PC-9 (cell line): ENCODE measurements at regions of chr14 and their contacts with region 1.

Region 1: DNA sequence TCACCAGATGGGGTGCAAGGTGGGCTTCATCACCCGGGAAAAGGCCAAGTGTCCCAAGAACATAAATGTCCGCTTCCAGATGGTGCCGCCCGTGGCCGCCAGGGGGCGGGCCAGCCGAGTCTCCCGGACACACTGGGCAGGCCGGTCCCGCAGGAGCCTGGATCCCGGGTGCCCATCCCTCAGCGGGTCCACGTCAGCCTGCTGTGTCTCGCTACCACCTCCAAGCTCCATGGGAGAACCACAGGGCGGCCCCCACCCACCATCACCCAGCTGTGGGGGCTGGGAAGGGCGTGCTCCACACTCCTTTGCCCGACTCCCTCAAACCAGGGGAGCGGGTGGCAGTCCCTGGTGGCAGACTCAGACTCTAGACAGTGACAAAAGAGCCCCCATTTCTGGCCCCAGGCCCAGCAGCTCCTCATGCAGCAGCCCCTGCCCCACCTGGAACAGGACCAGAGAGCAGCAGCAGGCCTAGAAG is 22.0 kb upstream of the NUDT14 start:
- DNase-seq: peak in 1 of 2 experiments; percentile 67
- H3K4me3 ChIP-seq: no peak overlapping the region
- H3K27ac ChIP-seq: no peak overlapping the region
- H3K4me1 ChIP-seq: peaks cover 23% of the 10 kb centered on the region
- H3K27me3 ChIP-seq: no peaks in the 10 kb centered on the region
- CTCF ChIP-seq: peak; percentile 95

Region 2: GRCh38 chr14:105281371-105282097 is 78.4 kb after region 1 on chr14:
- CTCF ChIA-PET with region 1: no interaction called
- POLR2A ChIA-PET with region 1: no interaction called
- intact Hi-C with region 1: loop called (anchors 2 kb)
- DNase-seq: peak in 1 of 2 experiments; percentile 20
- H3K4me3 ChIP-seq: no peak overlapping the region
- H3K27ac ChIP-seq: no peak overlapping the region
- H3K4me1 ChIP-seq: no peaks in the 10 kb centered on the region
- H3K27me3 ChIP-seq: no peaks in the 10 kb centered on the region
- CTCF ChIP-seq: peak; percentile 69

Region 3: DNA sequence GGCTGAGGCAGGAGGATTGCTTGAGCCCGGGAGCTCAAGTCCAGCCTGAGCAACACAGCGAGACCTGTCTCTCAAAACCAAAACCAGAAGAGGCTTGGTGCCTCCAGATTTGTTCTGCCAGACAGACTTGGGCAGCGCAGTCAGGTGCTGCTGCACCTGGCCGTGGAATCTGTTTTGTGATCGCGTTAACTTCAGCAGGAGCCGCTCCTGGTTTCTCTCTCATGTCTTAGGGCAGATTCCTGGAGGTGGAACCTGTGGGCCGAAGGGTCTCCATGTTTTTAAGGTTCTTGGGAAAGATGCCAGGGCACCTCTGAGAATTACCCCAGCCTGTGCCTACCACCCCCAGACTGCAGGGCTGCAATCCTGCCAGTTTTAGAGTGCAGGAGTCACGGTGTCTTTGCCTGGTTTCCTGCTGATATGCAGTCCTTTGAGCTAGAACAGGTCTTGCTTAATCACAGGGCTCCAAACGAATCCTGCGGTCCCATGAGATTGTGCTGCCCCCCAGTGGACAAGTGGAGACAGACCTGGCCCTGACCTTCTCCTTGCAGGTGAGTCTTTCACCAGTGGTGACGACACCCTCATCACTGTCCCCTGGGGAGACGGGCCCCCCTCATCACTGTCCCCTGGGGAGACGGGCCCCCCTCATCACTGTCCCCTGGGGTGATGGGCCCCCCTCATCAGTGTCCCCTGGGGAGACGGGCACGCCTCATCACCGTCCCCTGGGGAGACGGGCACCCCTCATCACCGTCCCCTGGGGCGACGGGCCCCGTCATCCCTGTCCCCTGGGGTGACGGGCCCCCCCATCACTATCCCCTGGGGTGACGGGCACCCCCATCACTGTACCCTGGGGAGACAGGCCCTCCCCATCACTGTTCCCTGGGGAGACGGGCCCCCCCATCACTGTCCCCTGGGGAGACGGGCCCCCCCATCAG is 149.1 kb after region 1 on chr14:
- CTCF ChIA-PET with region 1: no interaction called
- POLR2A ChIA-PET with region 1: no interaction called
- intact Hi-C with region 1: loop called (anchors 5 kb)
- DNase-seq: peak; percentile 79 to 83
- H3K4me3 ChIP-seq: no peak overlapping the region
- H3K27ac ChIP-seq: no peak overlapping the region
- H3K4me1 ChIP-seq: no peaks in the 10 kb centered on the region
- H3K27me3 ChIP-seq: no peaks in the 10 kb centered on the region
- CTCF ChIP-seq: peak; percentile 85

Region 4: DNA sequence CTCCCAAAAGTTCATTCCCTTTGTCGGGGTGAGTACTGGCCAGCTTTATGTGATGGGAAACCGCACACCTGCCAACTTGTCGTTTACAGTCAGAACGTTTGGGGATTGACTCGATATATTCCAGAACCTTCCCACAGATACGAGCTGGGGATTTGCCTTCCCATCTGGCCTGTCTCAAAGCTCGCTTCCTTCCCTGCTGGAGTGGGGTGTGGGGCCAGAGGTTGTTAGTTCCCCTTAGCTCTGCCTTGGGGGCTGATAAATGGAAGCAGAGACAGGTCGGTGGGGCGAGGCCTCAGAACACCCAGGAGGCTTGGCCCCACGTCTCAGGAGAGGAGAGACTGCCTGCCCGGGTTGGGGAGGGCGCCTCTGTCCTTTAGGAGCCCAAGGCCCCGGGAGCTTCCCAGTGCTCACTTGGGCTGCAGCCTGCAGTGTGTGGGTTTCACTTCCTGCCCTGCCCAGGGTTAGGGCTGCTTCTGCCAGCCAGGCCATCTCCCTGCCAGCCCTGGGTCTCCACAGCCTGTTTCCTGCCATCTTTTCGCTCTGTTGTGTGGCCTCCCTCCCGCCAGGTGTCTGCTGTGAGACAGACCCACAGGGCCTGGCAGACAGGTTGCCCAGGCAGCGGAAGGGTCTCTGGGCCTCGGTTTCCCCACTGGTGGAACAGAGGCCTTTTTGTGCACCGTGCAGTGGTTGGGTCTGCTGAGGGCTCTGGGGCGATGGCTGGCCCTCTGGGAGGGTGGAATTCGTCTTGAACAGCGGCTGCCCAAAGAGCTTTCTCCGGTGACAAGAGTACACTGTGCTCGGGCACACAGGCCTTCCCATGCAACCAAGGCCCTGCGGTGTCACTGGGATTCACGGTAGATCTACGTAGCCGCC is 187.1 kb after region 1 on chr14:
- CTCF ChIA-PET with region 1: no interaction called
- POLR2A ChIA-PET with region 1: no interaction called
- intact Hi-C with region 1: no loop called
- DNase-seq: no peak
- H3K4me3 ChIP-seq: no peak overlapping the region
- H3K27ac ChIP-seq: no peak overlapping the region
- H3K4me1 ChIP-seq: no peaks in the 10 kb centered on the region
- H3K27me3 ChIP-seq: no peaks in the 10 kb centered on the region
- CTCF ChIP-seq: no peak